ENCODE measurements at regions of chr2 and their contacts with region 1.

Region 1: GRCh38 chr2:171086352-171087290 is 74.1 kb downstream of the TLK1 start:
- DNase-seq: peak; percentile 7
- H3K4me3 ChIP-seq: no peak overlapping the region
- H3K27ac ChIP-seq: no peak overlapping the region
- H3K27me3 ChIP-seq: no peaks in the 10 kb centered on the region
- CTCF ChIP-seq: peak; percentile 74

Region 2: GRCh38 chr2:171034315-171034714 is 52.3 kb before region 1 on chr2:
- CTCF ChIA-PET with region 1: interaction called, 13 read pairs
- POLR2A ChIA-PET with region 1: no interaction called
- DNase-seq: no peak
- H3K4me3 ChIP-seq: no peak overlapping the region
- H3K27ac ChIP-seq: no peak overlapping the region
- H3K27me3 ChIP-seq: no peaks in the 10 kb centered on the region
- CTCF ChIP-seq: no peak

Region 3: GRCh38 chr2:171109571-171109970 is 22.9 kb after region 1 on chr2:
- CTCF ChIA-PET with region 1: interaction called, 14 read pairs
- POLR2A ChIA-PET with region 1: no interaction called
- DNase-seq: no peak
- H3K4me3 ChIP-seq: no peak overlapping the region
- H3K27ac ChIP-seq: no peak overlapping the region
- H3K27me3 ChIP-seq: no peaks in the 10 kb centered on the region
- CTCF ChIP-seq: no peak

Region 4: DNA sequence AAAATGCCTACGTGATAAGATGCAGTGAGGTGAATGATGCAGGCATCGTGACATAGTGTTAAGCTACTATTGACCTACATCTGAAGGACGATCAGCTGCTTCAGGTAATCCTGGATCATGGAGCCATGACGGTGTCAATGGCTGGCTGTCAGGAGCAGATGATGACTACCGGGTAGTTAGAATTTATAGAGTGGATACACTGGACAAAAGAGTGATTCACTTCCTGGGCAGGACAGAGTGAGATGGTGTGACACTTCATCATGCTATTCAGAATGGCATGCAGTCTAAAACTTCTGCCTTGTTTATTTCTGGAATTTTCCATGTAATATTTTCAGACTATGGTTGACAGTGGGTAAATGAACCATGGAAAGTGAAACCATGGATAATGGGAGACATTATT is 317.6 kb after region 1 on chr2:
- CTCF ChIA-PET with region 1: no interaction called
- POLR2A ChIA-PET with region 1: no interaction called
- DNase-seq: no peak
- H3K4me3 ChIP-seq: no peak overlapping the region
- H3K27ac ChIP-seq: no peak overlapping the region
- H3K27me3 ChIP-seq: no peaks in the 10 kb centered on the region
- CTCF ChIP-seq: no peak

Region 5: GRCh38 chr2:171529914-171530313 is 443.3 kb after region 1 on chr2:
- CTCF ChIA-PET with region 1: no interaction called
- POLR2A ChIA-PET with region 1: no interaction called
- DNase-seq: no peak
- H3K4me3 ChIP-seq: no peak overlapping the region
- H3K27ac ChIP-seq: no peak overlapping the region
- H3K27me3 ChIP-seq: no peaks in the 10 kb centered on the region
- CTCF ChIP-seq: peak; percentile 62

Measured in AG04450 (cell line).